ENCODE measurements at regions of chr10 and their contacts with region 1.

Region 1: GRCh38 chr10:43453266-43453831 is 16.4 kb downstream of the ZNF487 start:
- DNase-seq: peak; percentile 61
- CTCF ChIP-seq: no peak

Region 2: GRCh38 chr10:43372765-43373361 is 80.5 kb before region 1 on chr10:
- in situ Hi-C with region 1: no loop called
- DNase-seq: no peak
- CTCF ChIP-seq: no peak

Region 3: GRCh38 chr10:43399320-43400310 is 53.7 kb before region 1 on chr10:
- in situ Hi-C with region 1: loop called (anchors 5 kb)
- DNase-seq: no peak
- CTCF ChIP-seq: no peak

Measured in GM13976 (cell line).